Caco-2 (cell line): ENCODE measurements at regions of chr14 and their contacts with region 1.

Region 1: DNA sequence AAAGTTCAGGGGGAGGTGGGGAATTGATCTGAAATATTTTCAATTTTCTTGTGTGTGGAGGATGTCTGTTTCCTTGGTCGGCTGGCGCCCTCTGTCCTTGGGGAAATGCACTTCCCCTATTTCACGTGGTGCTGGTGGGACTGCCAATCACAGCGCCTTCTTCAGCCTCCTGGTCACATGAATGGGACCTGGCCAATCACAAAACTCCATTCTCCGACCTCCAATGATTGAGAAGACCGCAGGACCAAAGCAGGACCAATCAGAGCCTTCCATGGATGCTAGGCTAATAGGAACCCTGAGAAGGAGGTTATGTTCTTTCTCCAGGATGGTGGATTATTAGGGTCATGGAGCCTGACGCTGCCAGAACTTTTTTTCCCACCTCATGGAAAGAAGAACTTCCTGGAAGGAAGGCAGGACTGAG is 188.6 kb downstream of the TTC8 start:
- DNase-seq: peak; percentile 87 to 95
- H3K4me3 ChIP-seq: peak overlapping the region; percentile 45
- H3K4me3 Mint-ChIP-seq: peak overlapping the region; percentile 68
- H3K27ac Mint-ChIP-seq: peak overlapping the region; percentile 12
- H3K4me1 ChIP-seq: peaks cover 6% of the 10 kb centered on the region
- H3K4me1 Mint-ChIP-seq: peaks cover 7% of the 10 kb centered on the region
- H3K27me3 ChIP-seq: no peaks in the 10 kb centered on the region
- H3K27me3 Mint-ChIP-seq: no peaks in the 10 kb centered on the region
- CTCF ChIP-seq: peak; percentile 34 to 51

Region 2: DNA sequence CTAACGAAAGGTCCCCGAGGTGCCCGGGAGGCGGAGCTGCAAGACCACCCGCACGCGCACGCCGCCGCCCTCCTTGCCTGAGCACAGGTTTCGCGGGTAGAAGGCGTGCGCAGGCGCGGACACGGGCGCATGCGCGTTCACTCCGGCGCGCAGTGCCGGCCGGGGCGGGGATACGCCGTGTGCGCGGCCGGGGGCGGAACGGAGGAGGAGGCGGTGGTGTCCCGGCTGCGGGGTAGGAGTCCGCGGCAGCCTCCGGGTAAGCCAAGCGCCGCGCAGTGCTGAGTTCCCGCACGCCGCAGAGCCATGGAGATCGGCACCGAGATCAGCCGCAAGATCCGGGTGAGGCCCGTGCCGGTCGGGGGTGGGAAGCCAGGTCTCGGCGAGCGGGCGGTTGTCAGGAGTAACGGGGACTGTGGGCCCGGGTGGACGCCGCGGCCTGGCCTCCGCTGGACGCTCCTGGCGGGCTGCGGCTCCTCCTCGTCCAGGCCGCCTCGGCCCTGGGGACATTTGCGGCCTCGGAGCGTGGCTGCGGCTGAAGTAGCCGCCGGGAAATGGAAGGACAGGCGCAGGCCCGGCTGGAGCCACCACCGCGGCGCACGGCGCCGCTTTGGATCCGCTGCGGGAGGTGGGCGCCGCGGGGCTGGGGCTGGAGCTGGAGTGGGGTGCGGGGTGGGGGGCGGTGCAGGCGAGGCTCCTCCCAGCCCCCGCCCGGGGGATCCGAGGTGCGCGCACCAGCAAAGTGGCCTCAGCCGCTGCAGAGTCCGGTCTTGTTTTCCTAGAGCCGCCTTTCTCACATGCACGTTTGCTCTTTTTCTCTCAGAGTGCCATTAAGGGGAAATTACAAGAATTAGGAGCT is 450.0 kb before region 1 on chr14 and contains the start of gene ZC3H14:
- CTCF ChIA-PET with region 1: no interaction called
- POLR2A ChIA-PET with region 1: no interaction called
- intact Hi-C with region 1: loop called (anchors 2 kb)
- DNase-seq: peak; percentile 87 to 93
- H3K4me3 ChIP-seq: peak within 1 kb of the TSS; percentile 99
- H3K4me3 Mint-ChIP-seq: peak within 1 kb of the TSS; percentile 73
- H3K27ac Mint-ChIP-seq: peak within 1 kb of the TSS; percentile 44
- H3K4me1 ChIP-seq: peaks cover 18% of the 10 kb centered on the region; the same call in 1 of the 2 replicates
- H3K4me1 Mint-ChIP-seq: peaks cover 7% of the 10 kb centered on the region
- H3K27me3 ChIP-seq: no peaks in the 10 kb centered on the region
- H3K27me3 Mint-ChIP-seq: no peaks in the 10 kb centered on the region
- CTCF ChIP-seq: no peak
- total RNA-seq, gene ZC3H14: 77.1 and 77.6 TPM in 2 replicates

Region 3: GRCh38 chr14:88667555-88668273 is 345.4 kb before region 1 on chr14:
- CTCF ChIA-PET with region 1: interaction called, 8 read pairs
- POLR2A ChIA-PET with region 1: no interaction called
- intact Hi-C with region 1: loop called (anchors 1 kb)
- DNase-seq: peak; percentile 59 to 72
- H3K4me3 ChIP-seq: no peak overlapping the region
- H3K4me3 Mint-ChIP-seq: no peak overlapping the region
- H3K27ac Mint-ChIP-seq: no peak overlapping the region
- H3K4me1 ChIP-seq: no peaks in the 10 kb centered on the region
- H3K4me1 Mint-ChIP-seq: no peaks in the 10 kb centered on the region
- H3K27me3 ChIP-seq: no peaks in the 10 kb centered on the region
- H3K27me3 Mint-ChIP-seq: peaks cover 17% of the 10 kb centered on the region
- CTCF ChIP-seq: peak; percentile 81 to 89

Region 4: DNA sequence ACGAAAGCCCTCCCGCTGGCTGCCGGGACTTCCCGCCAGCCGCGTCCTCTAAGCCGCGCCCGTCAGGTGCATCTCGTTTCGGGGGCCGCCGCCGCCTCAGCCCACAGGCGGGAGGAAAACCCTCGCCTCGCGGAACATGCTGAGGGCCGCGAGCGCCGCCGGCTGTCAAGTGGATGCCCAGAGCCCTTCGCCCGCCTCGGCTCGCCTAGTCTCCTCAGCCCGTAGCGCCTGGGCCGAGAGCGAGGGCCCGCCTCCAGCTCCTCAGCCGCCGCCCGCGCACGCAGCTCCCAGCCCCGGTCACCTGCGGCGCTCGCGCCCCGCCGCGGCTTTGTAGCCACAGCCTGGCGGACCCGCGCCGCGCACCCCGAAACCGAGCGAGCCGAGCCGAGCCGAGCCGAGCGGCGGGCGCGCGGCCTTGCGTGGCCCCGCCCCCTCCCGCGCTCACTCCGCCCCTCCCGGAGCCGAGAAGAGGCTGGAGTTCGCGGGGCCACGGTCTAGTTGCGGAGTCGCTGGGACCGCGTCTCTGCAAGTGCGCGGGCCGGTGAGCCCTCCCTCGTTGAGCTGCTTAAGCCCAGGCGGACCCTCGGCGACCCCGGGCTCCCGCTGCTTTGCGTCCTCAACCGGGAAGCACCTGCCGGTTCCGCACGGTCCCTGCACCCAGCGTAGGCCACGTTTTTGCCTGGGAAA is 220.4 kb before region 1 on chr14 and contains the start of gene EML5:
- CTCF ChIA-PET with region 1: no interaction called
- POLR2A ChIA-PET with region 1: no interaction called
- intact Hi-C with region 1: loop called (anchors 5 kb)
- DNase-seq: peak; percentile 78 to 91
- H3K4me3 ChIP-seq: peak within 1 kb of the TSS; percentile 60
- H3K4me3 Mint-ChIP-seq: peak within 1 kb of the TSS; percentile 67
- H3K27ac Mint-ChIP-seq: no peak within 1 kb of the TSS
- H3K4me1 ChIP-seq: no peaks in the 10 kb centered on the region
- H3K4me1 Mint-ChIP-seq: no peaks in the 10 kb centered on the region
- H3K27me3 ChIP-seq: no peaks in the 10 kb centered on the region
- H3K27me3 Mint-ChIP-seq: peaks cover 4% of the 10 kb centered on the region
- CTCF ChIP-seq: peak; percentile 3 to 37
- total RNA-seq, gene EML5: 0.11 and 0.28 TPM in 2 replicates